ENCODE measurements at regions of chr20 and their contacts with region 1.

Region 1: DNA sequence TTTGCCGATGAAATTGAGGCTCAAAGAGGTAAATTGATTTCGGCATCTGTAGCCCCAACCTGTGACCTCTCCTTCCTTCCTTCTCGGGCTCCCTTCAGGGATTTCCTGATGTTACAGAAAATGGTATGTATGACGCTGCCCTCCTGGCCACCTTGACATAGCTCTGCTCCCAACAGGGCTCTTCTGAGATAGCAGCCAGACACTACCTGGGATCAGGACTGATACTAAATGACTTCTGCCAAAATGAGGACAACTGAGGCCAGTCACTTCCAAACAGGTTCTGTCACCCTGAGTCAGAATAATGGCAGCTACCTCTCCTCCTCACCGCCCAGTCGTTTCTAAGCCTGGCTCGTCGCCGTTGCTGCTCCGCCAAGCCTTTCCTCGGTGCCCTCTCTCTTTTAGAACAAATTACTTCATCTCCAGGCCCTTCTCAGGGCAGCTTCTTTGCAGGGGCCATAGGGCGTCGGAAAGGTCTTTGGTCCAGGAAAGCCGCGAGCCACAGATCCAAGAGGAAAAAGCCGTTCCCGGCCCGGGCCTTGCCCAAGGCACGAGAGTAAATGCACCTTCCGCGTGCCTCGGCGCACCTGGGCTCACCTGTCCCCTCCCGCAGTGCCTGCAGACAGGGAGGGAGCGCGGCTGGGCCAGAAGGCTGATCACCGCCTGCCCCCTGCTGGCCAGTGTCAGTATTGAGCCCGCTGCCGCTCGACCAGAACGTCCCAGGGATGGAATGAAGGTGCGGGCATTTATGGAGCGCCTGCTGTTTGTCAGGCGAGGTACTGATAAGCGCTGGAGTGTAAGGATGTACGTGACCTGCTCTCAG is 904 bp upstream of the LPIN3 start:
- DNase-seq: peak; percentile 66 to 90
- H3K4me3 ChIP-seq: peak overlapping the region; percentile 33
- H3K4me1 ChIP-seq: peaks cover 13% of the 10 kb centered on the region
- H3K27me3 ChIP-seq: no peaks in the 10 kb centered on the region

Region 2: GRCh38 chr20:40962730-40963504 is 376.8 kb before region 1 on chr20:
- in situ Hi-C with region 1: loop called (anchors 10 kb)
- DNase-seq: peak; percentile 39 to 81
- H3K4me3 ChIP-seq: no peak overlapping the region
- H3K4me1 ChIP-seq: no peaks in the 10 kb centered on the region
- H3K27me3 ChIP-seq: no peaks in the 10 kb centered on the region

Region 3: GRCh38 chr20:41161886-41162285 is 177.8 kb before region 1 on chr20:
- in situ Hi-C with region 1: no loop called
- DNase-seq: no peak
- H3K4me3 ChIP-seq: no peak overlapping the region
- H3K4me1 ChIP-seq: no peaks in the 10 kb centered on the region
- H3K27me3 ChIP-seq: no peaks in the 10 kb centered on the region

Region 4: DNA sequence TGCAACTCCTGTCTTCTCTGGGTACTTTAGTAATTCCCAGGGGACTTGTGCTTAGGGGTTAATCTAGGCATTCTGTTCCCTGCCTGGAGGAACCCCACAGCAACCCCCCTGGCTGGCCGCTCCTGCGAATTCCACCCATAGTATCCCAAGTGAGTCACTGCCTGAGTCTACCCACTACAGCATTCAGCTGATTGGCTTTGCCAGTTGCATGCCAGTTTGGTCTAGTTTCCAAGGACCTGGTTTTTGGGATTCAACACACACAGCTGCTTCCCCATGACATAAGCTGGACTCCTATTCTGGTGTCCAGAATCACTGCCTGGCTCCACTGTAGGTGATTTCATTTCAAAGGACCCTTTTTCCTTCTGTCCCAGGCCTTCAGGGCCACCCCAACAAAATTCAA is 162.1 kb before region 1 on chr20:
- in situ Hi-C with region 1: loop called (anchors 5 kb)
- DNase-seq: peak in 1 of 2 experiments; percentile 6
- H3K4me3 ChIP-seq: no peak overlapping the region
- H3K4me1 ChIP-seq: peaks cover 8% of the 10 kb centered on the region; the same call in 1 of the 2 replicates
- H3K27me3 ChIP-seq: no peaks in the 10 kb centered on the region